ENCODE measurements at regions of chr5 and their contacts with region 1.

Region 1: DNA sequence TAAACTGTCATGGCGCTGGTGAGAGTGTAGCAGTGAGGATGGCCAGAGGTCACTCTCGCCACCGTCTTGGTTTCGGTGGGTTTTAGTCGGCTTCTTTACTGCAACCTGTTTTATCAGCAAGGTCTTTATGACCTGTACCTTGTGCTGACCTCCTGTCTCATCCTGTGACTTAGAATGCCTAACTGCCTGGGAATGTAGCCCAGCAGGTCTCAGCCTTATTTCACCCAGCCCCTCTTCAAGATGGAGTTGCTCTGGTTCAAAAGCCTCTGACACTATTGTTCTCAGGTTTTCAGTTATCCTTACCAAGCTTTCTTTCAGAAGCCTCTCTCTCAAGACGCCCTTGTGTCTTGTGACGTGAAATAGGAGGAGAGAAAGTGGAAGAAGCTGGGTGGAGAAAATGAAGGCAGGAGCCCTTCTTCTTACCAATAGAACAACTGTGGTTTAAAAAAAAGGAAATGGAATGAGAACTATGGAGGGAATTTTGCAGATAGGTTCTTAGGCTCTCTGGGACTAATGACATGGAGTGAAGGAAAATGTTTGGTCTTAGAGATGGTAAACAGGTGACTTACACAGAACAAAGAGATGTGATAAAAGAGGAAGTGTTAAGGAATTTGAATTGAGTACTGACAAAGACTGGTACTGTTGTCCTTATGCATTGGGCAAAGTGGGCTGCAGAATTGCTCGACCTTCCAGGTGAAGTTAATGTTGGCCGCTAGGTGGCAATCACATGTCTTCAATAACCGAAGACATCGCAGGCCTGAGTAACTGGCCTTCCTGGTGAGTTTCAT is 133.3 kb upstream of the RAI14 start:
- DNase-seq: peak; percentile 67 to 73
- ATAC-seq: peak; percentile 92

Region 2: GRCh38 chr5:34656001-34656699 is 133.4 kb after region 1 on chr5 and contains the start of gene RAI14:
- intact Hi-C with region 1: loop called in 1 of 2 experiments (anchors 10 kb)
- DNase-seq: peak; percentile 74 to 78
- ATAC-seq: peak; percentile 84
- total RNA-seq, gene RAI14: 11.3 to 32.2 TPM

Region 3: DNA sequence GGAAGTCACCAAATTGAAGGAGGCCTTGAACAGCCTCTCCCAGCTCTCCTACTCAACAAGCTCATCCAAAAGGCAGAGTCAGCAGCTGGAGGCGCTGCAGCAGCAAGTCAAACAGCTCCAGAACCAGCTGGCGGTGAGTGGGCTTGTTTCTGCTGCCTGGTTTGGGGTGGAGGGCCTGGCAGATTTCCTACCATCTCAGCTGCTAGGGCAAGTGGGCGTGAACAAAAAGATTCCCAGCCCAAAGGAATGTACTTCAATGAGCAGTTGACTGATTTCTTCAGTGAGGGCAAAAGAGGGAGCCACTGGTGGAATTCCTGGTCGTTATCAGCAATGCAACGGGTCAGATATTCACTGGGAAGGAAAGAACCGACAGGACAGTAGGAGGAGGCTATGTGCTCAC is 303.6 kb after region 1 on chr5:
- intact Hi-C with region 1: loop called in 1 of 2 experiments (anchors 10 kb)
- DNase-seq: no peak
- ATAC-seq: no peak

Region 4: DNA sequence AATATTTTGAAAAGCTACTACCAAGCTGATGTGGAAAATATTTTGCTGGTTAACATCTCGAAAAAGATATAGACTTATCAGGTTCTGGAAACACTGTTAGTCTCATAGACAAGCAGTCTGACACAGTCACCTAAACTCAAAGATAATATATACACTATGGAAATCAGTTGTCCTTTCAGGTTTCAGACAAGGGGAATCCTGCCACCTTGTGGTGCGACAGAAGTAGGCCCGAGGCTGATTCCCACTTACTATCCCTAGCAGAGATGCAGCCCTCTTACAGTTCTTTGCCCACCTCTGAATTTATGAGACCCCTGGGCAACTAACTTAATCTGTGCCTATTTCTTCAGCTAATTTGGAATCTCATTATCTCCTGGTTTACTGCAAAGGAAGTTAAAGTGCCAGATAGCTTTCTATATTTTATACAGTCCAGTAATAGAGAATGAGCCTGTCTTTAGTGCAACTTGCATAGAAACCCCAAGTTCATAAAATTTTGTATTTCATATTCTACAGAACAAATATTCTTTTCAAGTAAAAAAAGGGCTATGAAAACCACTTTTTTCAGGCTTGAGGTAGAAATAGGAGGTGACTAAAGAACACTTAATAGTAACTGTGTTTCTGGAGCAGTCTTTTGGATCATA is 375.6 kb after region 1 on chr5:
- intact Hi-C with region 1: loop called in 1 of 2 experiments (anchors 2 kb)
- DNase-seq: peak; percentile 49 to 70
- ATAC-seq: peak; percentile 92

Measured in left colon (tissue), 2 donors.